CD4-positive, alpha-beta T cell (primary cell): ENCODE measurements at regions of chr3 and their contacts with region 1.

Region 1: DNA sequence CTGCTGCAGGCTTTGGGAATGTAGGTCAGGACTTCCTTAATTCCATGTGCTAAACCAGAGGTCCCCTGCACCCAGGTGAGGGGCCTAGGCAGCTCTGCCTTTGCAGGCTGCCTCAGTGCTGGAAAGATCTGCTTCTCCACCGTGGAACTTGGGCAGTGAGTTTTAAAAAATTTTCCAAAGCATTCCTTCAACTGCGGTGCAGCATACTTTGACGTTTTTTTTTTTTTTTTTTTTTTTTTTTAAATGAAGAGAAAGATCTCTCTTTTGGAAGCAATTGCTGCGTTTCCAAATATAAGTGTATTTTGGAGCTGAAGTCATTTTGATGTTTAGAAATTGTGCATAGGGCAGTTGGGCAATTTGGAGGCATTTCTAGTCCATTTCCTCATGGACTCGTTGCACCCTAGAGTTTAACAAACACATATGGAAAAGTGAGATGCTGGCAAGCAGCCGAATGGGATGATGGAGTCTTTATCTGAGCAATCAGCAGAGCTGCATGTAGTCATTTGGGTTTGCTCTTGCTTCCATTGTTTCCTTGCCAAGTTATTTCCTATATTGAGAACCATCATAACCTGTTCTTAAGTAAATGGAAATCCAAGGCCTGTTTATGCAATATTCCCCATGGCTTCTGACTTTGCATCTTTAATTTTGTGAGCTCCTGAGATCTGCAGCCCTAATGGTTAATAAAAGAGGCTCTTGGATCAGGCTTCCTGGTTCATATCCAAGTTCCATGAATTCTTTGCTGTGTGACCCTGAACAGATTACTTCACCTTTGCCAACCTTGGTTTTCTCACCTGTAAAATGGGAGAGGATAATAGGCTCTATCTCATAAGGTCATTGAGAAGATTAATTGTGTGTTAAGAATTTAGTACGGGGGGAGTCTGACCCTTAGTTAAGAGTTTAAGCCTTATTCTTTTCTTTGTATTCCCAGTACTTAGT is 31.2 kb downstream of the ITPR1 start:
- DNase-seq: no peak
- ATAC-seq: no peak
- H3K4me3 ChIP-seq: no peak overlapping the region
- H3K4me3 Mint-ChIP-seq: no peak overlapping the region
- H3K27ac ChIP-seq: no peak overlapping the region
- H3K27ac Mint-ChIP-seq: no peak overlapping the region
- H3K4me1 ChIP-seq: peaks cover 6% of the 10 kb centered on the region
- H3K4me1 Mint-ChIP-seq: peaks cover 36% of the 10 kb centered on the region
- H3K27me3 ChIP-seq: no peaks in the 10 kb centered on the region
- H3K27me3 Mint-ChIP-seq: no peaks in the 10 kb centered on the region
- CTCF ChIP-seq: no peak

Region 2: DNA sequence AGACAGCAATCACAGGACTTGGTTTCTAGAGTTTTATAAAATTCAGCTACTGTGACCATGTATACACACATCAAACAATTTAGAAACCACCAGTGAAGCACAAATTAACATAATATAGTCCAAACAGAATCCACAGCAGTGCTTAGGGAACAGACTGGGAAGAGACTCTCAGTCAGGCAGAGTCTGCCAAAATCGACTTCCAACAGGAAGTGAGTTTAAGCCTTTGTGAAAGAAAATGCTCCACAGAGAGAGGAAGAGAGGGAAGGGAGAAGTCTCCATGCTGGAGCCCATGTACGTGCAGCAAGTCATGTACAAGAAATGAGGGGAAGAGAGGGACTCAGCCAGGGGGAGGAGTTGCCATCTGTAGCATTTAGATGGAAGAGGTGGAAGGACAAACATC is 1586.8 kb before region 1 on chr3:
- CTCF ChIA-PET with region 1: no interaction called
- POLR2A ChIA-PET with region 1: no interaction called
- intact Hi-C with region 1: no loop called
- DNase-seq: no peak
- ATAC-seq: no peak
- H3K4me3 ChIP-seq: no peak overlapping the region
- H3K4me3 Mint-ChIP-seq: no peak overlapping the region
- H3K27ac ChIP-seq: no peak overlapping the region
- H3K27ac Mint-ChIP-seq: no peak overlapping the region
- H3K4me1 ChIP-seq: no peaks in the 10 kb centered on the region
- H3K4me1 Mint-ChIP-seq: no peaks in the 10 kb centered on the region
- H3K27me3 ChIP-seq: no peaks in the 10 kb centered on the region
- H3K27me3 Mint-ChIP-seq: peaks cover 16% of the 10 kb centered on the region
- CTCF ChIP-seq: no peak

Region 3: DNA sequence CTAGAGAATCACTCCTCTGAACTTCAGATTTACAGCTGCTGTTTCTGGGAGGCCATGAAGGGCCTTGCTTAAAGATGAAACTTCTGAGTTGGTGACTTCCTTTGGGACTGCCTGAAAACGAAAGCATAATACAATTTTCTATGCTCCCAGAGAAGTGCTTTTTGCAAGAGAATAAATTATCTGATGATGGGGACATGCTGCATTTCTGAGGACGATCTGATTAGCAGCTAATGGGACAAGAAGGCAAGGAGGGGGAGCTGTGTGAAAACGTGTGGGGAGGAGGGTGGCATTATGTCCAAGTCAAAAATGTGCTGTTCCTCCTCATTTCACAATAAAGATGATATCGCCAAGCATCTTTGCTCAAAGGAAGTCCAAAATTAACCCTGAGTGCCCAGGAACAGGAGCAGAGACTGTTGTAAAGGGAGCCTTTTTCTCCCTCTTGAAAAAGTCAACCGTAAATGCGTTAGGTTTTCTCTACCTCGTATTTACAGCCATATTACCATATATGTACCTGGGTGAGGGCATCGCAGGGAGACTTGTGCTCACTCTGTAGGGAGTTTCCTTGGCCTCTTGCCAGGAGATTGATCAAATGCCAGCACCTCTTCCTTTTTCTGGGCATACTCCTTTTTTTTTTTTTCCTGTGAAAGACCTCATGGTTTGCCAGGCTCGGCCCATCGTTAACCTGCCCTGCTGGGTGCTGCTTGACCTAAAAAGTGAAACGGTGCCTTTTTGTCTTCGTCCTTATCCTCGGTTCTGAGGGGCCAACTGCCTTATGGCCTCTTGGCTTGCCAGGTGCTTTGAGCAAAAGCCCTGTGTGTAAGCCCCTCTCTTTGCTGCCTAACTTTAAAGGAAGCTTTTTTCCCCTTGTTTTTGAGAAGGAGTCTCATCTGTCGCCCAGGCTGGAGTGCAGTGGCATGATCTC is 19.8 kb before region 1 on chr3:
- CTCF ChIA-PET with region 1: interaction called, 14 read pairs
- POLR2A ChIA-PET with region 1: interaction called, 5 read pairs
- intact Hi-C with region 1: loop called in 1 of 2 experiments (anchors 2 kb)
- DNase-seq: peak in 9 of 14 experiments; percentile 16 to 82 (median 42)
- ATAC-seq: peak; percentile 85
- H3K4me3 ChIP-seq: peak overlapping the region; percentile 57
- H3K4me3 Mint-ChIP-seq: peak overlapping the region; percentile 57
- H3K27ac ChIP-seq: peak overlapping the region; percentile 64 to 80
- H3K27ac Mint-ChIP-seq: peak overlapping the region; percentile 82
- H3K4me1 ChIP-seq: peaks cover 25% of the 10 kb centered on the region
- H3K4me1 Mint-ChIP-seq: peaks cover 38% of the 10 kb centered on the region
- H3K27me3 ChIP-seq: no peaks in the 10 kb centered on the region
- H3K27me3 Mint-ChIP-seq: no peaks in the 10 kb centered on the region
- CTCF ChIP-seq: no peak

Region 4: GRCh38 chr3:4633078-4634004 is 109.0 kb after region 1 on chr3:
- CTCF ChIA-PET with region 1: interaction called, 21 read pairs
- POLR2A ChIA-PET with region 1: no interaction called
- intact Hi-C with region 1: loop called (anchors 1 to 5 kb)
- DNase-seq: peak in 3 of 14 experiments; percentile 61 to 70 (median 69)
- ATAC-seq: peak; percentile 70
- H3K4me3 ChIP-seq: no peak overlapping the region
- H3K4me3 Mint-ChIP-seq: no peak overlapping the region
- H3K27ac ChIP-seq: no peak overlapping the region
- H3K27ac Mint-ChIP-seq: no peak overlapping the region
- H3K4me1 ChIP-seq: no peaks in the 10 kb centered on the region
- H3K4me1 Mint-ChIP-seq: peaks cover 7% of the 10 kb centered on the region
- H3K27me3 ChIP-seq: no peaks in the 10 kb centered on the region
- H3K27me3 Mint-ChIP-seq: no peaks in the 10 kb centered on the region
- CTCF ChIP-seq: peak; percentile 88